Activated naive CD4-positive, alpha-beta T cell treated with anti-CD3 and anti-CD28 coated beads for 36 hours (primary cell): ENCODE measurements at regions of chr7 and their contacts with region 1.

Region 1: DNA sequence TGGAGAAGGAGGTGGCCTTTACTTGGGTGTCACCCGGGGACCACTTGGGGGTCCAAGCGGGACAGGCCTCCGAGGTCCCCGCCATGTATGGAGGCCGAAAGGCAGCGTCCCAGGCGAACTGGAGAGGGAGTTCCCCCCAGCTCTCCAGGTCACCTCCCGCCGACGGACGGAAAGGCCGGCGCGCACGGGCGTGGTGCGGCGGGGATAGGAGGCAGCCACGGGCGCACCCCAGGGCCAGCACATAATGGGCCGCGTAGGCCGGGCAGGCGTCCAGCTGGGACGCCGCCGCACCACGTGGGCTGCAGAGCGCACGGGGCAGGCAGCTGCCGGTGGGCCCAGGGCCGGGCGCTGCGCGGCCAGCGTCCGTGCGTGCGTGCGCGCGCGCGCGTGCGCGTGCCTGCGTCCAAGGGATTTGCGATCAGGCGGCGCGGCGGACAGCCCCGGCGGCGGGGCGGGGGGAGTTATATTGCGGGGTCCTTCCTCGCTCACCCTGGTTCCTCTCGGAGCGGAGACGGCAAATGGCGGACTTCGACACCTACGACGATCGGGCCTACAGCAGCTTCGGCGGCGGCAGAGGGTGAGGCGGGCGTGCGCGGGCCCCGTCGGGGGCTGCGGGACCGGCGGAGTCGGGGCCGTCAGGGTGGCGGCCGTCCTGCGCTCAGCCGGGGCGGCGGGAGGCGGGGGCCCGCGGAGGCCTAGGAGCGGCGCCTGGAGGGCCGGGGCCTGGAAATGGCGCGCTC is at the start of gene EIF4H:
- DNase-seq: peak; percentile 95
- H3K4me3 Mint-ChIP-seq: peak within 1 kb of the TSS; percentile 87
- H3K27ac Mint-ChIP-seq: peak within 1 kb of the TSS; percentile 88
- H3K4me1 Mint-ChIP-seq: peaks cover 39% of the 10 kb centered on the region
- H3K27me3 Mint-ChIP-seq: no peaks in the 10 kb centered on the region
- total RNA-seq, gene EIF4H: 492 to 518 TPM

Region 2: GRCh38 chr7:74068393-74069085 is 105.5 kb before region 1 on chr7:
- CTCF ChIA-PET with region 1: interaction called, 4 read pairs
- intact Hi-C with region 1: loop called (anchors 2 kb)
- DNase-seq: no peak
- H3K4me3 Mint-ChIP-seq: no peak overlapping the region
- H3K27ac Mint-ChIP-seq: no peak overlapping the region
- H3K4me1 Mint-ChIP-seq: no peaks in the 10 kb centered on the region
- H3K27me3 Mint-ChIP-seq: no peaks in the 10 kb centered on the region

Region 3: DNA sequence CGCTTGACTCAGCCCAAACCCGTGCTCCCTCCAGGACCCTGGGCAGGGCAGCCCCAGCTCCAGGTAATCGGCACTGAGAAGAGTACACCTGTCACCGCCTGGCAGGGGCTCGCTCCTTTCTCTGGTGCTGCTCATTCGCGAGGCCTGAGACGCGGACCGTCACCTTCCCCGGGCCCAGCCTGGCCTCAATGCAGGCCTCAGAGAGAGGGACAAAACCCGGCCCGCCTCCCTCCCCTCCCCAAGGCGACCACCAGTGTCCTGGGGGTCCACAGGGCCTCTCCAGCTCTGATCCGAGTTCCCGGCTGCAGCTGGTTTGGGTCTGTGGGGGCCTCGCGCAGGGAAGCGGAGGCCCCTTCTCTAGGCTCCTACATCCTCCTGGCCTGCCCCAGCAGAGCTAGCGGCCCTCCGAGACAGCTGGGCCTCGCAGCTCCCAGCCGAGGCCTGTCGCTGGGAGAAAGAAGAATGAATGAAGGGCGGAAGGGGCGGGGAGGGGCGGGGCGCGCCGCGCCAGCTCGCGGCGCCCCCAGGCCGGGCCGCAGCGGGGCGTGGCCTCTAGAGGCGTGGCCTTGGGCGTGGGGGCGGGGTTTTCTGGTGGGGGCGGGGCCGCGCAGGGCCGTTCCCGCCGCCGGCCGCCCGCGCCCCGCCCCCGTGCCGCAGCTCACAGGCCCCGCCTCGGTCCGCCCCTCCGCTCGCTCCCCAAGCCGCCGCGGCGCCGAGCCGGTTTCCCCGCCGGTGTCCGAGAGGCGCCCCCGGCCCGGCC is 90.7 kb before region 1 on chr7 and contains the start of gene LIMK1:
- CTCF ChIA-PET with region 1: no interaction called
- intact Hi-C with region 1: loop called (anchors 1 kb)
- DNase-seq: peak; percentile 80
- H3K4me3 Mint-ChIP-seq: peak within 1 kb of the TSS; percentile 78
- H3K27ac Mint-ChIP-seq: peak within 1 kb of the TSS; percentile 76
- H3K4me1 Mint-ChIP-seq: peaks cover 10% of the 10 kb centered on the region
- H3K27me3 Mint-ChIP-seq: no peaks in the 10 kb centered on the region
- total RNA-seq, gene LIMK1: 7.9 to 9.2 TPM

Region 4: DNA sequence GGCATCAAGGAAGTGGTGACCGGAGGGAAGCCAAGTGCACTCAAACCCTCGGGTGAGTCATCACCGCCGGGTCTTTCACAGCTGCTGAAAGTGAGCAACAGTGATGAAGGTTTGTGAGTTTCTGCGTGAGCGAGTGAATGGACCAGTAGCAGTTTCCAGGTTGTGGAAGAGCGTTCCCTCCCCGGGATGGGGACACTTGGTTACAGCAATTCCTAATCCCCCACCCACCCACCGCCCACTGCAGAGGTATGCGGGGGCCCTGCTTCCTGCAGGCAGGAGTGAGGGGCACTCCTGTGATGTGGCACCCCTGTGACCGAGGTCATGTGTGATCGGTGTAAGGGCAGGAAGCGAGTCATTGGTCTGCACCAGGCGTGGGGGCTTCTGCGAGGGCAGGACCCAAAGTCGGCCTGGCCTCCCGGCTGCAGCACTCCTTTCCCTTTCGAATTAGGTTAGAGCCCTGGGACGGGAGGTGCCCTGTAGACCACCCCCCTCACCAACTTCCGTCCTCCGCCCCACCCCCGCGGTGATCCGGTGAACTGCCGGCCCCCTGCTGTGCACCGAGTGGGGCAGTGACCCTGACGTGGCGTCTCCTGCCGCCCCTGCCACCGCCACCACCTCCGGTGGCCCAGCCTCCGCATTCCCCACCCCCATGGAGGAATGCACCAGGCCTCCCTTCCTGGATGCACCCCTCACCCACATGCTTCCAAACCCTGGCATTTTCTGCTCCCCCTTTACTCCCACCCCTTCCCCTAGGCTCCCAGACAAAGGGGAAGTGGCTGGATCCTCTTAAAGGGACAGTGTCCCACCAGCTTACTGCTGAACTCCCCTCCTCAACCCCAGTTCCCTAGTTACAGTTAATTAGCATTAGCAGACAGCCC is 79.6 kb before region 1 on chr7:
- CTCF ChIA-PET with region 1: no interaction called
- intact Hi-C with region 1: loop called (anchors 1 kb)
- DNase-seq: peak; percentile 90
- H3K4me3 Mint-ChIP-seq: peak overlapping the region; percentile 66
- H3K27ac Mint-ChIP-seq: peak overlapping the region; percentile 75
- H3K4me1 Mint-ChIP-seq: peaks cover 18% of the 10 kb centered on the region
- H3K27me3 Mint-ChIP-seq: no peaks in the 10 kb centered on the region

Region 5: GRCh38 chr7:74193054-74193453 is 19.0 kb after region 1 on chr7:
- CTCF ChIA-PET with region 1: interaction called, 11 read pairs
- intact Hi-C with region 1: no loop called
- DNase-seq: no peak
- H3K4me3 Mint-ChIP-seq: no peak overlapping the region
- H3K27ac Mint-ChIP-seq: no peak overlapping the region
- H3K4me1 Mint-ChIP-seq: peaks cover 7% of the 10 kb centered on the region
- H3K27me3 Mint-ChIP-seq: no peaks in the 10 kb centered on the region

Region 6: GRCh38 chr7:74656837-74657691 is 483.0 kb after region 1 on chr7:
- CTCF ChIA-PET with region 1: no interaction called
- intact Hi-C with region 1: loop called (anchors 2 kb)
- DNase-seq: peak; percentile 98
- H3K4me3 Mint-ChIP-seq: peak overlapping the region; percentile 85
- H3K27ac Mint-ChIP-seq: peak overlapping the region; percentile 82
- H3K4me1 Mint-ChIP-seq: peaks cover 49% of the 10 kb centered on the region
- H3K27me3 Mint-ChIP-seq: peaks cover 1% of the 10 kb centered on the region